ENCODE measurements at regions of chr9 and their contacts with region 1.

Region 1: GRCh38 chr9:98974994-98975712 is 31.4 kb downstream of the COL15A1 start:
- DNase-seq: peak; percentile 64 to 84
- H3K4me3 ChIP-seq: peak overlapping the region; percentile 29; the same call in 1 of the 2 replicates
- H3K27ac ChIP-seq: no peak overlapping the region
- H3K4me1 ChIP-seq: 0 out of 2 replicates have a peak, but pooled peaks cover 3% of the 10 kb centered on the region
- H3K27me3 ChIP-seq: no peaks in the 10 kb centered on the region
- CTCF ChIP-seq: peak; percentile 93

Region 2: DNA sequence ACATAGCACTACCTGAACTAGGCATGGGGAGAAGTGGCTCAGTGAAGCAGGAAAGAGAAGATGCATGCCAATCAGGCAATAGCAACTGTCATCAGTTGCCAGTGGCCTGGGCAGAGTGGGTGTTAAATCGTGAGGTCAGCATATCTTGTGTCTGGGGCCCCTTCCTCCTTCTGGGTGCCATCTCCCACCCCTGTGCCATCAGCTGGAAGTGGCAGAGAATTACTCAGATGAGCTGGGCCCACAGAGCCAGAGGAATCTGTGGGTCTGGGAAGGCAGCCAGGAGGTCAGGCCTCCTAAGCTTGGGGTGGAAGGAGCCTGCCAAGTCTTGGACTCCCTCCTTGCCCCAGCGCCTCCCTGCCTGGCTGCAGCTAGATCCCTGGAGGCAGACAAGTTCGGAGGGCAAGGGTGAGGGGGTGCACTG is 101.2 kb before region 1 on chr9:
- CTCF ChIA-PET with region 1: no interaction called
- POLR2A ChIA-PET with region 1: no interaction called
- intact Hi-C with region 1: loop called (anchors 5 kb)
- DNase-seq: no peak
- H3K4me3 ChIP-seq: no peak overlapping the region
- H3K27ac ChIP-seq: no peak overlapping the region
- H3K4me1 ChIP-seq: no peaks in the 10 kb centered on the region
- H3K27me3 ChIP-seq: peaks cover 19% of the 10 kb centered on the region
- CTCF ChIP-seq: no peak

Region 3: DNA sequence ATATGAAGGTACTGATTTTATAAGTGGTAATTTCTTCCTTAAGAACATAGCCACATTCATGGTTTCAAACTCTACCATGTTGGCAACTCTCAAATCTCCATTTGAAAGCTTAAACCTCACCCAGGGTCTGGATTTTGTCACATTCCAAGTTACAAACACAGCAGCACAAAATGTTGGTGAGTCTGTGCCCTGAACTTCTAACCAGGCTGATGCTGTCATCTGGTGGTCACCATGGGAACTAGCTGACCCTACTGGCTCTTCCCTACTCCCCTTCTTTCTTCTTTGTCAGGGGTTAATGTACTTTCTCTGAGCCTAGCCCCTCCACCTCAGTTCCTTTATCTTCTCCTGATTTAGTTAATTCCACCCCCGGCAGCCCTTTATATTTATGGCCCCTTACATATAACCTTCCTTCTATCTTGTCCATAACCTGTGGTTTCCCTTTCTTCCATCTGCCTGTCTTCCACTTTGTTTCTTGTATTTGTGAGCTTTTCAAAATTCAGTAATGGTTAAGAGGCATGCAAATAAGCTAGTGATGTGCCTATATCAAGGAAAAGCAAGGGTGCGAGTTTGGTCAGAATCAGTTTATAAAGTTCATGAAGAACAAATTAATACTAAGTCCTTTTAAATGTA is 165.6 kb after region 1 on chr9:
- CTCF ChIA-PET with region 1: interaction called, 3 read pairs
- POLR2A ChIA-PET with region 1: no interaction called
- intact Hi-C with region 1: loop called (anchors 1 kb)
- DNase-seq: peak in 1 of 2 experiments; percentile 34
- H3K4me3 ChIP-seq: no peak overlapping the region
- H3K27ac ChIP-seq: no peak overlapping the region
- H3K4me1 ChIP-seq: no peaks in the 10 kb centered on the region
- H3K27me3 ChIP-seq: no peaks in the 10 kb centered on the region
- CTCF ChIP-seq: peak; percentile 74

Measured in PC-9 (cell line).